Naive thymus-derived CD4-positive, alpha-beta T cell (primary cell): ENCODE measurements at regions of chrX and their contacts with region 1.

Region 1: DNA sequence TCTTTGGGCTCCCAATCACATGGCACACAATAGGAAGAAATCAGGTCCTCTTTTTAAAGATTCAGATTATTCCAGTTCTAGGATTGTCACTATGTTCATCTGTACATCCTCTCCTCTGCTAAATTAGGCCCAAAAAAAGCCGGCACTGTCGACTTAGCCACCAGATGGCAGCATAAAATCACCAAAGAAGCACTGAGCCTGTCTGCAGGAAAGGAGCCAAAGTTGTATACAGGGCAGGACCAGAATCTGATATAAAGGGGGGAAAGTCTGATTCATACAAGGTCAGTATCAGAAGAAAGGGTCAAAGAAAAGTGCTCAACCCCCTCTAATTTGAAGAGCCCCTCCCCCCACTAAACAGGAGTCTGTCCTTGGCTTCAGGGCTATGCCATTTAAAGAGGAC is 292.5 kb downstream of the CHIC1 start:
- DNase-seq: peak; percentile 11 to 81 (median 59)
- ATAC-seq: peak; percentile 64
- H3K4me3 ChIP-seq: no peak overlapping the region
- H3K4me3 Mint-ChIP-seq: no peak overlapping the region
- H3K27ac ChIP-seq: no peak overlapping the region
- H3K27ac Mint-ChIP-seq: no peak overlapping the region
- H3K4me1 ChIP-seq: no peaks in the 10 kb centered on the region
- H3K4me1 Mint-ChIP-seq: peaks cover 0 to 4% (median 0%) of the 10 kb centered on the region in 7 donors
- H3K27me3 ChIP-seq: no peaks in the 10 kb centered on the region
- H3K27me3 Mint-ChIP-seq: no peaks in the 10 kb centered on the region

Region 2: DNA sequence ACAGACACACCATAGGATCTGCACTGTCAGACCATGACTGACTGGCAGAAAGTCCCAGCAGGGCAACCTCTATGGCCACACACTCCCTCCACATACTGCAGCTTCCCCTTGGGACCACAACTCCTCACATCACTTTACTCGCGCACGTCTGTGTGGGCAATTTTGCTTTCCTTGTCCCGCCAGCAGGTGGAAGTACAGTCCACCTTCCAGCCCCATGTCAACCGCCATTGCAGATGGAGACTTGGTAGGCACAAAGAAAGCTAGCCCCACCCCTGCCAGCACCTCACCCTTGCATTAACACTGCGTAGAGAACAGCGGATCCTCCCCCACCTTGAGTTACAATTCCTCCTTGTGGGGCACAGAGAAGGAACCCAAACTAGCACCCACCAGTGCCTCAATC is 566.5 kb before region 1 on chrX:
- CTCF ChIA-PET with region 1: no interaction called
- POLR2A ChIA-PET with region 1: no interaction called
- intact Hi-C with region 1: no loop called
- DNase-seq: no peak
- ATAC-seq: no peak
- H3K4me3 ChIP-seq: no peak overlapping the region
- H3K4me3 Mint-ChIP-seq: no peak overlapping the region
- H3K27ac ChIP-seq: no peak overlapping the region
- H3K27ac Mint-ChIP-seq: no peak overlapping the region
- H3K4me1 ChIP-seq: no peaks in the 10 kb centered on the region
- H3K4me1 Mint-ChIP-seq: no peaks in the 10 kb centered on the region
- H3K27me3 ChIP-seq: no peaks in the 10 kb centered on the region
- H3K27me3 Mint-ChIP-seq: peaks cover 0 to 2% (median 0%) of the 10 kb centered on the region in 5 donors

Region 3: DNA sequence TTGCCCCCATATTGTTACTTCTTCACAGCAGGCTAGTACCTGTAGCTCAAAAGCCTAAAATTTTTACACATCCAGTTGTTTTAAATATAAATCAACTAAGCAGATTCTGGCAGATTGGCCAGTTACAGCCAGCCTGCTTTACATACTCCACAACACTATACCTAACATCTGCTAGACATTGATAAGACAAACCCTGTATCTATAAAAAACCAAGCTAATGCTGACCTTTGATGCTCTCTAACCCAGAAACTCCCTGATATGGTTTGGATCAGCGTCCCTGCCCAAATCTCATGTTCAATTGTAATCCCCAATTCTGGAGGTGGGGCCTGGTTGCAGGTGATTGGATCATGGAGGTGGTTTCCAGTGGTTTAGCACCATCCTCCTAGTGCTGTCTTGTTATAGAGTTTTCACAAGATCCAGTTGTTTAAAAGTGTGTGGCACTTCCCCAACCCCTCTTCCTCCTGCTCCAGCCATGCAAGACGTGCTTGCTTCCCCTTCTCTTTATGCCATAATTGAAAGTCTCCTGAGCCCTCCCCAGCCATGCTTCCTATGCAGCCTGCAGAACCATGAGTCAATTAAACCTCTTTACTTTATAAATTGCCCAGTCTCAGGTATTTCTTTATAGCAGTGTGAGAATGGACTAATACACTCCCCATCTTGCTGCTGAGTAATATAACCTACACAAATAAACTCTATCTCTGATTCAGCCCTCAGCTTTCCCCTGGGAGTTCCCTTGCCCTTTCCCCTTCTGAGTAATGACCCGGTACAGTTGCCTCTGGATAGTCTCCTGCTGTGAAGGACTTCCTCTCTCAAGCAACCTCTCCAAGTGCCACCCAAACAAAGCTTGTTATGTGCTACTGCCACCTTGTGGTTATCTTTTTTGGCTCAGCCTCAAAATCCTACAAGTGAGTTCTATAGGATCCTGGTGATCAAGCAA is 488.1 kb after region 1 on chrX:
- CTCF ChIA-PET with region 1: no interaction called
- POLR2A ChIA-PET with region 1: no interaction called
- intact Hi-C with region 1: loop called (anchors 1 kb)
- DNase-seq: peak in 8 of 9 donors; percentile 17 to 59 (median 44)
- ATAC-seq: peak; percentile 82
- H3K4me3 ChIP-seq: no peak overlapping the region
- H3K4me3 Mint-ChIP-seq: no peak overlapping the region
- H3K27ac ChIP-seq: no peak overlapping the region
- H3K27ac Mint-ChIP-seq: peak overlapping the region in 1 of 9 donors; percentile 37
- H3K4me1 ChIP-seq: no peaks in the 10 kb centered on the region
- H3K4me1 Mint-ChIP-seq: peaks cover 0 to 5% (median 3%) of the 10 kb centered on the region in 7 donors
- H3K27me3 ChIP-seq: no peaks in the 10 kb centered on the region
- H3K27me3 Mint-ChIP-seq: peaks cover 0 to 4% (median 4%) of the 10 kb centered on the region in 5 donors

Region 4: DNA sequence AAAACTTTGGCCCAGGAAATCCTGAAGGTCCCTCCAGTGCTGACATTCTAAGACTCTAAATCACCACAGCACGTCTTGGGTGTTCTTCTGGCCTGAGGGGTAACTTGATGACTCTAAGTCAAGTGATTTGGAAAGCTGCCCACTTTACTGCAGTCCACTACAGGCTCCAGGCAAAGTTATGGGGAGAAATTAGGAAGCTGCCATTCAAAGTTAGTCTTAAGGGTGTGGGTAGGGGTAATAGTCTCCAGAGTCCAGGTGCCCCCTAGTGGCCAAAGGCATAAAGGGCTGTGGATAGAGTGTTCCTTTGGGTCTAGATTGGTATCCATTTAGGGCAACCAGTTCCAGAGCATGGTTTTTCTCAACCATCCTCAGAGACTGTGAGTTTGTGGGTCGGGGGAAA is 527.1 kb after region 1 on chrX:
- CTCF ChIA-PET with region 1: no interaction called
- POLR2A ChIA-PET with region 1: no interaction called
- intact Hi-C with region 1: loop called in 1 of 2 experiments (anchors 1 kb)
- DNase-seq: peak; percentile 11 to 50 (median 30)
- ATAC-seq: peak; percentile 82
- H3K4me3 ChIP-seq: no peak overlapping the region
- H3K4me3 Mint-ChIP-seq: no peak overlapping the region
- H3K27ac ChIP-seq: no peak overlapping the region
- H3K27ac Mint-ChIP-seq: no peak overlapping the region
- H3K4me1 ChIP-seq: no peaks in the 10 kb centered on the region
- H3K4me1 Mint-ChIP-seq: no peaks in the 10 kb centered on the region
- H3K27me3 ChIP-seq: no peaks in the 10 kb centered on the region
- H3K27me3 Mint-ChIP-seq: peaks cover 0 to 6% (median 5%) of the 10 kb centered on the region in 5 donors